B cell (primary cell): ENCODE measurements at regions of chr7 and their contacts with region 1.

Region 1: GRCh38 chr7:5237286-5237685 is 45.5 kb upstream of the SLC29A4 start:
- DNase-seq: peak; percentile 38
- ATAC-seq: no peak
- H3K4me3 ChIP-seq: no peak overlapping the region
- H3K4me3 Mint-ChIP-seq: peak overlapping the region; percentile 78
- H3K27ac ChIP-seq: no peak overlapping the region
- H3K27ac Mint-ChIP-seq: peak overlapping the region; percentile 84
- H3K4me1 ChIP-seq: peaks cover 61 to 67% of the 10 kb centered on the region in 2 donors
- H3K4me1 Mint-ChIP-seq: peaks cover 59% of the 10 kb centered on the region
- H3K27me3 ChIP-seq: peaks cover 0 to 9% (median 4%) of the 10 kb centered on the region in 4 experiments
- H3K27me3 Mint-ChIP-seq: peaks cover 5% of the 10 kb centered on the region
- CTCF ChIP-seq: no peak

Region 2: DNA sequence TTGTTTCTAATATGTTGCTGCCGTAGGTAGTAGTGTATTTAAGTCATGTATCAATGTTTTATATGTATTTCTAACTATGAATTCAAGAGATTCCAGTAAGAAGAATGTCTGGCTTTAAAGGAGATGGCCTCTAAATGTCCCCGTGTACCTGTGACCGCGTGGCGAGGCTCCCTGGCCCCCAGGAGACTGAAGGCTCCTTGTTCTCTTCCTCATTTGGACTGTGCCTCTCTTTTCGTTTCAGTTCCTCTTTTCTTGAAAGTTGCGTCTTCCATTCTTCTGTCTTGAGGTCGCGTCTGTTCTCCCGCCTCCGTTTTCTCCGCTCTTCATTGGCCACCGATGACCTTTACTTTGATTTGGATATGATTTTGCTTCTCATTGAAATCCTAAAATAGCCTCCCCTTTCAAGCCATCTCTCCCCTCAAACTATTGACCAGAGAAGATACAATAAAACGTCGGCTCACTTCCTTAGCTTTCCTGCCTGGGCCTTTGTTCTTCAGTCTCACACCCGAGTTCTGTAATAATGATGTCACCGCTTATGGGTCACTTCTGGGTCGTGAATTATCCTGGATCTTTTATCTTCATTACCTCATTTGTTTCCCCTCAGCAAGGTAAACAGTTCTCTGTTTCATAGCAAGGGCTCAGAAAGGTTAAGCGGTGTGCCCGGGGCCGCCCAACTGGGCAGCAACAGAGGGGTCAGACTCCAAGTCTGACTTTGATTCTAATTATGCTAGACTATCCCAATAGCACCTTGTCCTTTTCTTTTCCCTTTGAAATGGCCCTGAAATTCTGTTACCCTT is 18.5 kb before region 1 on chr7:
- CTCF ChIA-PET with region 1: interaction called, 12 read pairs
- POLR2A ChIA-PET with region 1: interaction called, 57 read pairs
- intact Hi-C with region 1: no loop called
- DNase-seq: peak; percentile 92
- ATAC-seq: peak; percentile 92
- H3K4me3 ChIP-seq: peak overlapping the region in 2 of 5 experiments; percentile 3 to 20
- H3K4me3 Mint-ChIP-seq: peak overlapping the region; percentile 76
- H3K27ac ChIP-seq: peak overlapping the region; percentile 80 to 89
- H3K27ac Mint-ChIP-seq: peak overlapping the region; percentile 89
- H3K4me1 ChIP-seq: peaks cover 25 to 33% of the 10 kb centered on the region in 2 donors
- H3K4me1 Mint-ChIP-seq: peaks cover 30% of the 10 kb centered on the region
- H3K27me3 ChIP-seq: no peaks in the 10 kb centered on the region
- H3K27me3 Mint-ChIP-seq: no peaks in the 10 kb centered on the region
- CTCF ChIP-seq: no peak

Region 3: GRCh38 chr7:5423844-5424688 is 186.8 kb after region 1 on chr7:
- CTCF ChIA-PET with region 1: interaction called, 10 read pairs
- POLR2A ChIA-PET with region 1: interaction called, 3 read pairs
- intact Hi-C with region 1: loop called (anchors 5 kb)
- DNase-seq: peak; percentile 82
- ATAC-seq: peak; percentile 59
- H3K4me3 ChIP-seq: peak overlapping the region; percentile 21 to 70 (median 52)
- H3K4me3 Mint-ChIP-seq: peak overlapping the region; percentile 84
- H3K27ac ChIP-seq: no peak overlapping the region
- H3K27ac Mint-ChIP-seq: peak overlapping the region; percentile 69
- H3K4me1 ChIP-seq: peaks cover 92 to 94% of the 10 kb centered on the region in 2 donors
- H3K4me1 Mint-ChIP-seq: peaks cover 56% of the 10 kb centered on the region
- H3K27me3 ChIP-seq: peaks cover 0 to 93% (median 64%) of the 10 kb centered on the region in 4 experiments
- H3K27me3 Mint-ChIP-seq: peaks cover 29% of the 10 kb centered on the region
- CTCF ChIP-seq: no peak

Region 4: GRCh38 chr7:5450549-5451372 is 213.5 kb after region 1 on chr7:
- CTCF ChIA-PET with region 1: interaction called, 20 read pairs
- POLR2A ChIA-PET with region 1: no interaction called
- intact Hi-C with region 1: no loop called
- DNase-seq: peak; percentile 52
- ATAC-seq: peak; percentile 68
- H3K4me3 ChIP-seq: no peak overlapping the region
- H3K4me3 Mint-ChIP-seq: no peak overlapping the region
- H3K27ac ChIP-seq: no peak overlapping the region
- H3K27ac Mint-ChIP-seq: no peak overlapping the region
- H3K4me1 ChIP-seq: no peaks in the 10 kb centered on the region
- H3K4me1 Mint-ChIP-seq: no peaks in the 10 kb centered on the region
- H3K27me3 ChIP-seq: peaks cover 0 to 4% (median 0%) of the 10 kb centered on the region in 4 experiments
- H3K27me3 Mint-ChIP-seq: peaks cover 2% of the 10 kb centered on the region
- CTCF ChIP-seq: peak; percentile 47